ENCODE measurements at regions of chr1 and their contacts with region 1.

Region 1: DNA sequence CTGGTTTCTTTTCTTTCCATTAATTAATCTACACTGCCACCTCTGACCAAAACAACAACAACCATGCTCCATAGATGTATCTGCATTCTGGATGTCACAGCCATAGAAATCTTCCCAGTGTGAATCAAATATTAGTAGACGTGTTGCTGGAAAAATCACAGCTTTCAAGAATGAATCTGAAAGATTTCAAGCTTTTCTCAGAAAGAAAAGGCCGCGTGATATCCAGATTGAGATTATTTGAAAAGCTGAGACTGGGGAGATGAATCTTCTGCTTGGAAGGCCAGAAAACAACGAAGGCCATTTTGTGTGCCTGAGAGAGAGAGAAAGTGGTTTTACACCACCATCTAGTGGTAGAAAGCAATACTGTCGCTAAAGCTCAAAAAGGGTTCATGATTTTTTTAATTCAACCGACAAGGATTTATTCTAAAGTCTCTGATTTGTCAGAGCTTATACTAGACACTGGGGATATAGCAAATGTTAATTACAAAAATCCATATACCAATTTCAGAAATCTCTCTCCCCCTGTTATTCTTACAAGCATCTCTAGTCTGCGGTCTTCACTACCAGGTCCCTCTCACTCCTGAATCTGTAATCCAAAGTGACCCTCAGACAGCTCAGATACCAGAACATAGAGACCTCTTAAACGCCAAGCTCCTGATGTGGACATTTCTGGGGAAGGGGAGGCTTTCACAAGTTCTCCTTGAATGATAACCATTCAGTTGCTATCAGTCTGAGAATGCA is 87.5 kb upstream of the SGIP1 start:
- DNase-seq: peak in 7 of 9 donors; percentile 45 to 82 (median 74)
- ATAC-seq: peak; percentile 85
- H3K4me3 ChIP-seq: no peak overlapping the region
- H3K4me3 Mint-ChIP-seq: peak overlapping the region in 9 of 10 donors; percentile 59 to 85 (median 74)
- H3K27ac ChIP-seq: peak overlapping the region; percentile 72
- H3K27ac Mint-ChIP-seq: peak overlapping the region; percentile 87 to 98 (median 94)
- H3K4me1 ChIP-seq: peaks cover 12 to 18% of the 10 kb centered on the region in 2 donors
- H3K4me1 Mint-ChIP-seq: peaks cover 18 to 32% (median 25%) of the 10 kb centered on the region in 7 donors
- H3K27me3 ChIP-seq: no peaks in the 10 kb centered on the region
- H3K27me3 Mint-ChIP-seq: peaks cover 0 to 20% (median 0%) of the 10 kb centered on the region in 5 donors

Region 2: DNA sequence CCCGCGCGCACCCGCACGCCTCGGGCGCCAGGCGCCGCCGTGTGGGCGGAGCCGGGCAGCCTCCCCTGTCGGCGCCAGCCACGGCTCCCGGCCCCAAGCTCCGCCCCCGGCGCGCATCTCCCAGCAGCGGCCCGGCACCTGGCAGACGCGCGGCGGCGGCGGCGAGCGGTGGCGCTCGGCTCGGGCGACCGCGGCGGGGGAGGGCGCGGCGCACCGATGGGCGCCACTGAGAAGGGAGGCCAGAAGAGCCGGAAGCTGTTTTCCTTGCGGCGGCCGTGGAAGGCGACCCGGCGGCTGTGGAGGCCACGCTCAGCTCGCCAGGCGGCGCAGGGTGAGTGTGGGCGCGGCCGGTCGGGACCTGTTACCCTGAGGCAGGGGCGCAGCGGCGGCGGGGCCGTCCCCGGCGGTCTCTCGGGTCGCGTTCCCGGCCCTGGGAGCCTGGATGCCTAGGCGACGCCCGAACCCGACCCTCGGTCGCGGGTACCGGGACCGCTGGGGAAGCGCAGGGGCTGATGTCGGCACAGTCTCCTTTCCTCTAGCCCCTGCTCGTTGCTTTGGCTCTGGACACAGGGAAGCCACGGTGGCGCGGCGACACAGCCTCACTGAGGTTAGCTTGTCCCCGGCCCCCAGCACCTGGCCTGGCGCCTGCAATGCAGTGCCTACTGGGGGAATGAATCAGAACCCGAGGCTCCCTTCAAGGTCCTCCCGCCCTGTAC is 1192.0 kb before region 1 on chr1:
- CTCF ChIA-PET with region 1: no interaction called
- POLR2A ChIA-PET with region 1: no interaction called
- intact Hi-C with region 1: loop called in 1 of 2 experiments (anchors 10 kb)
- DNase-seq: peak; percentile 70 to 90 (median 82)
- ATAC-seq: peak; percentile 97
- H3K4me3 ChIP-seq: peak overlapping the region; percentile 80
- H3K4me3 Mint-ChIP-seq: peak overlapping the region; percentile 87 to 99 (median 92)
- H3K27ac ChIP-seq: peak overlapping the region; percentile 69
- H3K27ac Mint-ChIP-seq: peak overlapping the region in 5 of 9 donors; percentile 10 to 93 (median 78)
- H3K4me1 ChIP-seq: peaks cover 10 to 14% of the 10 kb centered on the region in 2 donors
- H3K4me1 Mint-ChIP-seq: peaks cover 12 to 23% (median 18%) of the 10 kb centered on the region in 7 donors
- H3K27me3 ChIP-seq: no peaks in the 10 kb centered on the region
- H3K27me3 Mint-ChIP-seq: peaks cover 0 to 31% (median 10%) of the 10 kb centered on the region in 5 donors

Region 3: DNA sequence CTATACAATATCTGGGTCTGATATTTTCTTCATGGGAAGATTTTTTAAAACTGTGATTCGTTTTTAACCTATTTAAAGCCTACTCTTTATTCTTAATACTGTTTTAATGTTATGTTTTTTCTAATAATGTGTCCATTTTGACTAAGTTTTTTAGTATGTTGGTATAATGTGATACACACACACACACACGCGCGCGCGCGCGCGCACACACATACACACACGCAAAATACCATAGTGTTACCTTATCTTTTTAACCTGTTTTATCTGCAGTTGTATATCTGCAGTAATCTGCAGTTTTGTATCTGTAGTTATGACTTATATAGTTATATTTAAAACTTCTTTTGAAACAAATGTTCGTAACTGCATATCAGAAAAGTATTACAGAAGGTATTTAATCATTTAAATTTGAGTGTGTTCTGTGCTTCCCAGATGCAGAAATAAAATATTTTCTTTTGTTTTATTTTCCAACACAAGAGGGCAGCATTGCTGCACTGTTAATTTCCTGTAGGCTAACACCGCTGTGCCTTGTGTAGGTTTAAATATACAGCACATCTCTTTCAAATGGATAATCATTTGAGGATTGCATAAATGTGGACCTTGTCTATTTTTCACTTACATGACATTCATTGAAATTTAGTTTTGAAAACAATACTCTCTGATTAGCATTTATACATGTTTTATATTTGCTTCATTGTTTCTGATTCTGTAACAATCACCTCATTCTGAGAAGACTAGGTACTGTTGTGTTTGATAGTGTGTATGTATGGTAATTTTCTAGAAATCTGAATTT is 487.7 kb before region 1 on chr1:
- CTCF ChIA-PET with region 1: interaction called, 61 read pairs
- POLR2A ChIA-PET with region 1: no interaction called
- intact Hi-C with region 1: loop called (anchors 1 kb)
- DNase-seq: peak in 7 of 9 donors; percentile 23 to 75 (median 64)
- ATAC-seq: peak; percentile 80
- H3K4me3 ChIP-seq: no peak overlapping the region
- H3K4me3 Mint-ChIP-seq: no peak overlapping the region
- H3K27ac ChIP-seq: no peak overlapping the region
- H3K27ac Mint-ChIP-seq: no peak overlapping the region
- H3K4me1 ChIP-seq: no peaks in the 10 kb centered on the region
- H3K4me1 Mint-ChIP-seq: peaks cover 0 to 12% (median 0%) of the 10 kb centered on the region in 7 donors
- H3K27me3 ChIP-seq: no peaks in the 10 kb centered on the region
- H3K27me3 Mint-ChIP-seq: peaks cover 0 to 7% (median 3%) of the 10 kb centered on the region in 5 donors

Region 4: GRCh38 chr1:66262211-66262963 is 184.0 kb before region 1 on chr1:
- CTCF ChIA-PET with region 1: interaction called, 274 read pairs
- POLR2A ChIA-PET with region 1: interaction called, 3 read pairs
- intact Hi-C with region 1: no loop called
- DNase-seq: no peak
- ATAC-seq: no peak
- H3K4me3 ChIP-seq: no peak overlapping the region
- H3K4me3 Mint-ChIP-seq: peak overlapping the region in 2 of 10 donors; percentile 60 to 73
- H3K27ac ChIP-seq: no peak overlapping the region
- H3K27ac Mint-ChIP-seq: peak overlapping the region in 2 of 9 donors; percentile 16 to 39
- H3K4me1 ChIP-seq: peaks cover 0 to 19% of the 10 kb centered on the region in 2 donors
- H3K4me1 Mint-ChIP-seq: peaks cover 15 to 69% (median 37%) of the 10 kb centered on the region in 7 donors
- H3K27me3 ChIP-seq: no peaks in the 10 kb centered on the region
- H3K27me3 Mint-ChIP-seq: no peaks in the 10 kb centered on the region

Region 5: DNA sequence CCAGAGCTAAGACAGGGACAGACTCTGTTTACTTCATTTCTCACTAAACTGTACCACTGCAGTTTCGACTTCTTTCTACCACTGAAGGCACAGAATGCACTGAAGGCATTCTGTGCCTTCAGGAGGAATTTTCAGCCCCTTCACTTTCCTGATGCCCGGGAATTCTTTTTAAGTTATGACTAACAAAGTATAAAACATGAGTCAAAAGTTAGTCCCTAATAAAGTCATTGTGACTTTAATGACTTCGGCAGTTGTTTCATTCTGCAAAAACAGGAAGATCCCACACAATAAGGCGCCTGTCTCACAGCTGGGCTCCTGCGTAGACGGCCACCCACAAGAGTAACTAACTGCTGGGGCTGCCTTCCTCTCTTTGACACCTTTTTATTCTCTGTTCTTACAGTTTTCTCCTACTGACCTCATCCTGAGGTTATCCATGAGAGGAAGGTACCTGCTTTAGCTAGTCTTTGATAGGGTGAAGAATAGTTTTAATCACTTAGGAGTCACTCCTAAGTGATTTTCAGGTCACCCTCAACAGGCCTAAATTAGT is 96.4 kb before region 1 on chr1:
- CTCF ChIA-PET with region 1: interaction called, 14 read pairs
- POLR2A ChIA-PET with region 1: interaction called, 3 read pairs
- intact Hi-C with region 1: loop called (anchors 5 kb)
- DNase-seq: peak in 7 of 9 donors; percentile 55 to 77 (median 71)
- ATAC-seq: peak; percentile 84
- H3K4me3 ChIP-seq: peak overlapping the region; percentile 33
- H3K4me3 Mint-ChIP-seq: peak overlapping the region; percentile 70 to 86 (median 77)
- H3K27ac ChIP-seq: peak overlapping the region; percentile 62
- H3K27ac Mint-ChIP-seq: peak overlapping the region; percentile 81 to 95 (median 90)
- H3K4me1 ChIP-seq: peaks cover 74 to 78% of the 10 kb centered on the region in 2 donors
- H3K4me1 Mint-ChIP-seq: peaks cover 66 to 100% (median 96%) of the 10 kb centered on the region in 7 donors
- H3K27me3 ChIP-seq: no peaks in the 10 kb centered on the region
- H3K27me3 Mint-ChIP-seq: no peaks in the 10 kb centered on the region

Region 6: GRCh38 chr1:66413136-66413837 is 33.1 kb before region 1 on chr1:
- CTCF ChIA-PET with region 1: no interaction called
- POLR2A ChIA-PET with region 1: no interaction called
- intact Hi-C with region 1: no loop called
- DNase-seq: no peak
- ATAC-seq: no peak
- H3K4me3 ChIP-seq: no peak overlapping the region
- H3K4me3 Mint-ChIP-seq: no peak overlapping the region
- H3K27ac ChIP-seq: no peak overlapping the region
- H3K27ac Mint-ChIP-seq: peak overlapping the region in 1 of 9 donors; percentile 15
- H3K4me1 ChIP-seq: no peaks in the 10 kb centered on the region
- H3K4me1 Mint-ChIP-seq: peaks cover 7 to 29% (median 21%) of the 10 kb centered on the region in 7 donors
- H3K27me3 ChIP-seq: no peaks in the 10 kb centered on the region
- H3K27me3 Mint-ChIP-seq: no peaks in the 10 kb centered on the region

Region 7: GRCh38 chr1:66996018-66996682 is 549.7 kb after region 1 on chr1:
- CTCF ChIA-PET with region 1: no interaction called
- POLR2A ChIA-PET with region 1: no interaction called
- intact Hi-C with region 1: no loop called
- DNase-seq: peak; percentile 14 to 75 (median 63)
- ATAC-seq: peak; percentile 93
- H3K4me3 ChIP-seq: no peak overlapping the region
- H3K4me3 Mint-ChIP-seq: no peak overlapping the region
- H3K27ac ChIP-seq: no peak overlapping the region
- H3K27ac Mint-ChIP-seq: peak overlapping the region in 5 of 9 donors; percentile 7 to 78 (median 74)
- H3K4me1 ChIP-seq: peaks cover 0 to 5% of the 10 kb centered on the region in 2 donors
- H3K4me1 Mint-ChIP-seq: peaks cover 4 to 24% (median 23%) of the 10 kb centered on the region in 7 donors
- H3K27me3 ChIP-seq: no peaks in the 10 kb centered on the region
- H3K27me3 Mint-ChIP-seq: no peaks in the 10 kb centered on the region

Measured in naive thymus-derived CD4-positive, alpha-beta T cell (primary cell).